Naive thymus-derived CD4-positive, alpha-beta T cell (primary cell): ENCODE measurements at regions of chr5 and their contacts with region 1.

Region 1: GRCh38 chr5:81301271-81302015 is at the start of gene ZCCHC9:
- DNase-seq: peak; percentile 84 to 94 (median 90)
- ATAC-seq: peak; percentile 96
- H3K4me3 ChIP-seq: peak within 1 kb of the TSS; percentile 75
- H3K4me3 Mint-ChIP-seq: peak within 1 kb of the TSS; percentile 91 to 99 (median 96)
- H3K27ac ChIP-seq: peak within 1 kb of the TSS; percentile 96
- H3K27ac Mint-ChIP-seq: peak within 1 kb of the TSS; percentile 92 to 99 (median 98)
- H3K4me1 ChIP-seq: peaks cover 14 to 21% of the 10 kb centered on the region in 2 donors
- H3K4me1 Mint-ChIP-seq: peaks cover 34 to 73% (median 55%) of the 10 kb centered on the region in 7 donors
- H3K27me3 ChIP-seq: no peaks in the 10 kb centered on the region
- H3K27me3 Mint-ChIP-seq: no peaks in the 10 kb centered on the region
- total RNA-seq, gene ZCCHC9: 15.5 to 35.1 (median 27.5) TPM

Region 2: GRCh38 chr5:79612667-79613198 is 1688.7 kb before region 1 on chr5:
- CTCF ChIA-PET with region 1: no interaction called
- POLR2A ChIA-PET with region 1: no interaction called
- intact Hi-C with region 1: loop called in 1 of 2 experiments (anchors 1 kb)
- DNase-seq: no peak
- ATAC-seq: no peak
- H3K4me3 ChIP-seq: peak overlapping the region; percentile 84
- H3K4me3 Mint-ChIP-seq: peak overlapping the region; percentile 95 to 100 (median 97)
- H3K27ac ChIP-seq: peak overlapping the region; percentile 90
- H3K27ac Mint-ChIP-seq: peak overlapping the region; percentile 91 to 99 (median 98)
- H3K4me1 ChIP-seq: peaks cover 14 to 18% of the 10 kb centered on the region in 2 donors
- H3K4me1 Mint-ChIP-seq: peaks cover 25 to 58% (median 44%) of the 10 kb centered on the region in 7 donors
- H3K27me3 ChIP-seq: no peaks in the 10 kb centered on the region
- H3K27me3 Mint-ChIP-seq: peaks cover 0 to 6% (median 2%) of the 10 kb centered on the region in 5 donors

Region 3: GRCh38 chr5:80481019-80481893 is 820.2 kb before region 1 on chr5:
- CTCF ChIA-PET with region 1: no interaction called
- POLR2A ChIA-PET with region 1: no interaction called
- intact Hi-C with region 1: loop called in 1 of 2 experiments (anchors 2 kb)
- DNase-seq: peak in 5 of 9 donors; percentile 18 to 41 (median 30)
- ATAC-seq: peak; percentile 85
- H3K4me3 ChIP-seq: no peak overlapping the region
- H3K4me3 Mint-ChIP-seq: no peak overlapping the region
- H3K27ac ChIP-seq: no peak overlapping the region
- H3K27ac Mint-ChIP-seq: peak overlapping the region in 1 of 9 donors; percentile 47
- H3K4me1 ChIP-seq: no peaks in the 10 kb centered on the region
- H3K4me1 Mint-ChIP-seq: peaks cover 0 to 7% (median 0%) of the 10 kb centered on the region in 7 donors
- H3K27me3 ChIP-seq: no peaks in the 10 kb centered on the region
- H3K27me3 Mint-ChIP-seq: peaks cover 0 to 3% (median 0%) of the 10 kb centered on the region in 5 donors

Region 4: DNA sequence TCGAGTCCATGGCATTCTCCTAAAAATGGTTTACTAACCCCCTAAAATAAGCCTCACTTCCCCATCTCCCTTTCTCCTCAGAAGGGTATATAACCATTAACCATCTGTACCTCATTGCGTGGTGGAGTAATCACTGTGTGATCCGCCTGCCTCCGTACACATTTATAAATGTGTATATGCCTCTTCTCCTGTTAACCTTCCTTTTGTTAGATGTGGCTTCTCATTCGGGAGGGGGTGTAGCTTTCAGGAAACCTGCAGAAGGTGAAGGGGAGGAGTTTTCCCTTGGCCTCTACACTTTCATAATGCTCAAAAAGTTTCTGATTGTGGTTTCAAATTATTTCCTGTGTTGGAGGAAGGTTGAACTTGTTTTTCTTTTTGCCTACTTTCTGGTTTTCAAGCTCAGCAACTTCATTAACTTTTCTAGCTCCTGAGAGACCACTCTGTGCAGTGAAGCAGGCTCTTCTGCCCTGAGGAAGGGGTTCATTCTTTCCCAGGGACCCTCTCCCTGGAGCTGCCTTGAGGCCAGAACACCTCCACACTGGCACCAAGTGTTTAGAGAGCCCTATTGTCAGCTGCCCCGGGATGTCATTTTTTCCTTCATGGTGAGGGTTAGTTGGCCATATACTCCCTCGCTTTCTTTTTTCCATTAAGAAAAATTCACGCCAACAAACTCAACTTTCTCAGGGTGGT is 294.4 kb before region 1 on chr5:
- CTCF ChIA-PET with region 1: no interaction called
- POLR2A ChIA-PET with region 1: no interaction called
- intact Hi-C with region 1: loop called in 1 of 2 experiments (anchors 10 kb)
- DNase-seq: peak in 8 of 9 donors; percentile 48 to 91 (median 88)
- ATAC-seq: peak; percentile 95
- H3K4me3 ChIP-seq: peak overlapping the region; percentile 53
- H3K4me3 Mint-ChIP-seq: peak overlapping the region; percentile 75 to 95 (median 89)
- H3K27ac ChIP-seq: peak overlapping the region; percentile 80
- H3K27ac Mint-ChIP-seq: peak overlapping the region; percentile 92 to 100 (median 95)
- H3K4me1 ChIP-seq: peaks cover 35 to 64% of the 10 kb centered on the region in 2 donors
- H3K4me1 Mint-ChIP-seq: peaks cover 45 to 93% (median 80%) of the 10 kb centered on the region in 7 donors
- H3K27me3 ChIP-seq: no peaks in the 10 kb centered on the region
- H3K27me3 Mint-ChIP-seq: no peaks in the 10 kb centered on the region

Region 5: DNA sequence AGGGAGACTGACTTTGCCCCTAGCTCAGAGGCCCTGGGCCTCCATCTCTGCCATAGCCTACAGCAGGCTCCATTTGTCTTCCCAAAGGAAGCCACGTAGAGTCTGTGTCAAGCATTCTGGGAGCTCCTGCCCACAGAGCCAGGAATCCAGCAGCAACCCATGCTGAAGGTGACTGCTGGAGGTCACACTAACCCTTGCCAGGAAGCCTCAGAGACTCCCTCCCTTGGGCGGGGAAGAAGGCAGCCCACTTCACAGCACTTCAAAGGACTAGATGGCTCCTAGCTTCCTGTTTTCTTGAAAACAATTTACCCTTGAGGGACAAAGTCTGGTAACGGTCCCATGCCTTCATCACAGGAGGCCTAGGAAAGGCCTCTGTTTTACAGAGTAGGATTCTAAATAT is 66.6 kb before region 1 on chr5:
- CTCF ChIA-PET with region 1: no interaction called
- POLR2A ChIA-PET with region 1: no interaction called
- intact Hi-C with region 1: no loop called
- DNase-seq: no peak
- ATAC-seq: no peak
- H3K4me3 ChIP-seq: no peak overlapping the region
- H3K4me3 Mint-ChIP-seq: peak overlapping the region in 2 of 10 donors; percentile 1 to 25
- H3K27ac ChIP-seq: no peak overlapping the region
- H3K27ac Mint-ChIP-seq: peak overlapping the region in 1 of 9 donors; percentile 65
- H3K4me1 ChIP-seq: peaks cover 7 to 10% of the 10 kb centered on the region in 2 donors
- H3K4me1 Mint-ChIP-seq: peaks cover 10 to 32% (median 20%) of the 10 kb centered on the region in 7 donors
- H3K27me3 ChIP-seq: no peaks in the 10 kb centered on the region
- H3K27me3 Mint-ChIP-seq: no peaks in the 10 kb centered on the region

Region 6: GRCh38 chr5:81533629-81534405 is 232.4 kb after region 1 on chr5:
- CTCF ChIA-PET with region 1: no interaction called
- POLR2A ChIA-PET with region 1: no interaction called
- intact Hi-C with region 1: loop called in 1 of 2 experiments (anchors 10 kb)
- DNase-seq: no peak
- ATAC-seq: no peak
- H3K4me3 ChIP-seq: no peak overlapping the region
- H3K4me3 Mint-ChIP-seq: peak overlapping the region in 9 of 10 donors; percentile 8 to 74 (median 50)
- H3K27ac ChIP-seq: peak overlapping the region; percentile 22
- H3K27ac Mint-ChIP-seq: peak overlapping the region in 8 of 9 donors; percentile 77 to 92 (median 85)
- H3K4me1 ChIP-seq: peaks cover 0 to 38% of the 10 kb centered on the region in 2 donors
- H3K4me1 Mint-ChIP-seq: peaks cover 28 to 98% (median 78%) of the 10 kb centered on the region in 7 donors
- H3K27me3 ChIP-seq: no peaks in the 10 kb centered on the region
- H3K27me3 Mint-ChIP-seq: no peaks in the 10 kb centered on the region

Region 7: DNA sequence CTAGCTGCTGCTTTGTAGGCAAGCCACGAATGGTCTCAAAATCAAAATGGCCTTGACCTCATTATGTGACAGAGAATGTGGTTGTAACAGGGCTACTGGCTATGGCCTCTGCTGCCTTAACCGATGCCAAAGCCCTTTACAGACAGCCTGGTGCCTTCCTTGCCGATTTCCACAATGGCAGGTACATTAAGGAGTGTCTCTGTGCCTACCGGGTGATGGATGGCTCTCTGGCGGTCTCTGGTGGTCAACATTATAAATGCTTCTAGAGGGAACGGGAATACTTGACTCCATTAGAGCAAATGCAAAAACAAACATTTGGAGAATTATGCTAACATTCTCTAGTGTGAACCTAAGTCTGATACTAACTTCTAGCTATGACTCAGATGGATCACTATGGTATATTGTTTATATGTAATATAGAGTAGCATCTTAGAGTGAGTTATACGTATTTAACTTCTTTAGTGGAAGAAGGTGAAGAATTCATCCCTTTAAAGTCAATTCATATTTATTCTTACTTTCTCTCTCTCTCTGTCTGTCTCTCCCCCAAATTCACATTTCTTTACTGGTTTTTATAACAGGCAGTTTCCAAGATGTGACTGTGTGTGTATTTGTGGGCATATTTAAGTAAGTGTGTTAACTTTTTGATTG is 924.2 kb after region 1 on chr5:
- CTCF ChIA-PET with region 1: no interaction called
- POLR2A ChIA-PET with region 1: no interaction called
- intact Hi-C with region 1: loop called (anchors 1 to 5 kb)
- DNase-seq: peak; percentile 30 to 63 (median 57)
- ATAC-seq: peak; percentile 90
- H3K4me3 ChIP-seq: no peak overlapping the region
- H3K4me3 Mint-ChIP-seq: peak overlapping the region in 2 of 10 donors; percentile 23 to 33
- H3K27ac ChIP-seq: no peak overlapping the region
- H3K27ac Mint-ChIP-seq: no peak overlapping the region
- H3K4me1 ChIP-seq: no peaks in the 10 kb centered on the region
- H3K4me1 Mint-ChIP-seq: peaks cover 0 to 11% (median 4%) of the 10 kb centered on the region in 7 donors
- H3K27me3 ChIP-seq: no peaks in the 10 kb centered on the region
- H3K27me3 Mint-ChIP-seq: no peaks in the 10 kb centered on the region

Region 8: GRCh38 chr5:82252744-82253143 is 951.3 kb after region 1 on chr5:
- CTCF ChIA-PET with region 1: no interaction called
- POLR2A ChIA-PET with region 1: no interaction called
- intact Hi-C with region 1: no loop called
- DNase-seq: no peak
- ATAC-seq: no peak
- H3K4me3 ChIP-seq: no peak overlapping the region
- H3K4me3 Mint-ChIP-seq: no peak overlapping the region
- H3K27ac ChIP-seq: no peak overlapping the region
- H3K27ac Mint-ChIP-seq: no peak overlapping the region
- H3K4me1 ChIP-seq: no peaks in the 10 kb centered on the region
- H3K4me1 Mint-ChIP-seq: no peaks in the 10 kb centered on the region
- H3K27me3 ChIP-seq: no peaks in the 10 kb centered on the region
- H3K27me3 Mint-ChIP-seq: no peaks in the 10 kb centered on the region